ENCODE measurements at regions of chr17 and their contacts with region 1.

Region 1: GRCh38 chr17:50161023-50161910 is 4.5 kb upstream of the SGCA start:
- DNase-seq: peak; percentile 95
- ATAC-seq: peak; percentile 77

Region 2: GRCh38 chr17:50101346-50102163 is 59.7 kb before region 1 on chr17:
- intact Hi-C with region 1: loop called (anchors 10 kb)
- DNase-seq: peak; percentile 75
- ATAC-seq: peak; percentile 83

Region 3: DNA sequence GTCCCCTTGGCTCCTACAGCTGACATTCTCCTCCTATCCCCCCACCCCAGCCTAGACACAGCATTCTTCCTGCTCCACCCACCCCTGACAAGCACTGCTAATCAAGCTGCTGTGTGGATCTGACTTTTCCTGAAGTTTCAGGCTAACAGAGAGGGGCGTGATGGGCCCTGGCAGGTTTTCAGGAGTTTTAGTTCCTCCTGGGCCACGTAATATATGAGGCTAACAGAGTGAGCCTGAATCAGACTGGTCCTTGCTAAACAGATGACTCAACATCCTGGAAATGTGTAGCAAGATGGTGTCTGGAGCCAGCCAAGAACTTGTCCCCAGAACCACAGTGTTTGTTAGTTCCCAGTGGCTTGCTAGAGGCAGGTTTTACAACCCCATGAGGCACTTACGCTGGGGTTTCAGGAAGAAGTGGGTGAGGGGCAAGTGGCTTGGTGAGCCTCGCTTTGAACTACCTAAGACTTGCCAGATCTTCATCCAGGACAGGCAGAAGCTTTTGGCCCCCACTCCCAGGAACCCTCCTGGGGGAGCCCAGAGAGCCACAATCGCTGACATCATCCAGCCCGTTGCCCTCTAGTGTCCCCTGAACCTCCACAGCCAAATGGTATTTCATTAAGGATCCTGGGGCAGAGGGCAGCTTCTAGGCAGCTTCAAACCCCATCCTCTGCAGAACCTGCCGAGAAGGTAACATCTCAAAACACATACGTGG is 128.9 kb after region 1 on chr17:
- intact Hi-C with region 1: no loop called
- DNase-seq: peak; percentile 68
- ATAC-seq: peak; percentile 95